T-cell (primary cell): ENCODE measurements at regions of chr19 and their contacts with region 1.

Region 1: DNA sequence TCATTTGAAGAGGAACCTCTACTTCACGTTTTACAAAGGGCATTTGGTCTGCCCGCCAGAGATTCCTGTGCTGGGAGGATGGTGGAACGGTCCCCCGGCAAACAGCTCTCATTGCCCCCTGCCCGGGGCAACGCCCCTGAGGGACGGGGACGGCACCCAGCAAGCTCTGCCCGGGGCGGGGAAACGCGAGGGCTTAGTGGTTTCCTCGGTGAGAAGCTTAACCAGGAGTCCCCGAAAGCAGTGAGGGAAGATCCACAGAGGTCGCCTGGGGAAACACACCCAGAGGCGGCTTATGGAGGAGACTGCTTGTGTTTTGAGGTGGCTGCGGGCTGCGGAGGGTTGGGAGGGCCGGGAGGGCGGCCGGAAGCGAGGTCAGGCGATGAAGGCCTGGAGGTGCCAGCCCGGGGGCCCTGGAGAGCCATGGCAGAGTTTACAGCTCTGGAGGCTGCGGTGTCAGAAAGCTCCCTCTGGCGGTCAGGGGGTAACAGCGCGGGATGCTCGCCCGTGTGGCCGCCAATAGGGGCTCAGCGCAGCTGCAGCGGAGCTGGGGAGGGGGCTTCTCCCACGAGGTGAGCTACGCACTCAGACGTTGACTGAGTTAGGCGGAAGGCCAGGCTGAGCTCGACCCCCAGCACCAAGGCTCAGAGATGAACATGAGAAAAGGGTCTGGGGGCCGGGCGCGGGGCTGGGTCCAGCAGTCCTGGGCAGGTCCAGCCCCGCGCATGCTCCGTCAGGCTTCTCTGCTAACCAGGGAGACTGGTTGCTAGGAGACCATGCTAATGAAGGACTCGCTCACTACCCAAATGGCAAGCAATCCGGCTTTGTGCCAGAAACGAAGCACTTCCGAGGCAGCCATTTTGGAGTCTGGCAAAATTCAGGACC is 652 bp upstream of the TPGS1 start:
- DNase-seq: peak; percentile 82 to 98 (median 91)
- ATAC-seq: peak; percentile 62 to 65 (median 63)
- H3K4me3 ChIP-seq: peak overlapping the region; percentile 79 to 86
- H3K4me3 Mint-ChIP-seq: peak overlapping the region; percentile 92 to 97 (median 96)
- H3K27ac ChIP-seq: peak overlapping the region; percentile 93
- H3K27ac Mint-ChIP-seq: peak overlapping the region; percentile 99 to 100
- H3K4me1 ChIP-seq: peaks cover 13 to 52% of the 10 kb centered on the region in 2 experiments
- H3K4me1 Mint-ChIP-seq: peaks cover 36 to 51% (median 41%) of the 10 kb centered on the region in 3 donors
- H3K27me3 ChIP-seq: no peaks in the 10 kb centered on the region
- H3K27me3 Mint-ChIP-seq: no peaks in the 10 kb centered on the region

Region 2: DNA sequence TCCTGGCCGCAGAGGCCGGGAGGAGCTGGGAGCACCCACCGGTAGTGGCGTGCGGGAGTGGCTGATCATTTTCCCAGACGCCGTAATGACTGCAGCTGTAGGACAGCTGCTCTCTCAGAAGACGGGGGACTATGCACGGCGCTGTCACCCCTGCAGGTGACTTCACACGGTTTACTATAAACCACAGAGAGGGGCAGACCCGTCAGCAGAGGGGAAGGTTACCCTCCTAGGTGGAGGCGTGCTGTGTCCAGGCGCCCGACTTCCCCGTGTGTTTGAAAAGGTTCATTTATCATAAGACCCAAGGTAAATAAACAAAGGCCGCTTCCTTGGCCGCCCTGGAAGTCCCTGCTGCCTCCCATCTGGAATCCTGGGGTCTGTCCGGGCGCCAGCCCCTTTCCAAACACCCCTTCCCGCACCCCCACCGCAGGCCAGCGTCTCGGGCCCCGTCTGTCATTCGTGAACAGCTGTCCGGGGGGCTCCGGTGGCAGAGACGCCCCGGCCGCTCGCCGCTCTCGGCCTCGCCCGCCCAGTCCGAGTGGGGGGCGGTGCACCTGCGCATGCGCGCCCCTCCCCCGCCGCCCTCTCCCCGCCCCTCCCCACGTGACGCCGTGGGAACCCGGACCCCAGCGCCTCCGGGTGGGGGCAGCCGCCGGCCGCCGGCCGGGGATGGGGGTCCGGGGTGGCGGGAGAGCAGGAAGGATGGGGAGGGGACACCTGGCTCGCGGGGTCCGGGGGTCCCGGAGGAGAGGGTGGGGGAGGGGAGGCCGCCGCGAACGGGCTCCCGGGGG is 46.7 kb before region 1 on chr19:
- CTCF ChIA-PET with region 1: no interaction called
- POLR2A ChIA-PET with region 1: no interaction called
- DNase-seq: peak in 11 of 35 experiments; percentile 4 to 30 (median 17)
- ATAC-seq: peak in 3 of 4 experiments; percentile 36 to 74 (median 63)
- H3K4me3 ChIP-seq: peak overlapping the region in 1 of 2 donors; percentile 21
- H3K4me3 Mint-ChIP-seq: peak overlapping the region; percentile 63 to 72 (median 70)
- H3K27ac ChIP-seq: no peak overlapping the region
- H3K27ac Mint-ChIP-seq: no peak overlapping the region
- H3K4me1 ChIP-seq: peaks cover 0 to 18% of the 10 kb centered on the region in 2 experiments
- H3K4me1 Mint-ChIP-seq: peaks cover 0 to 14% (median 10%) of the 10 kb centered on the region in 3 donors
- H3K27me3 ChIP-seq: peaks cover 10 to 71% of the 10 kb centered on the region in 2 experiments
- H3K27me3 Mint-ChIP-seq: peaks cover 0 to 31% of the 10 kb centered on the region in 2 donors

Region 3: DNA sequence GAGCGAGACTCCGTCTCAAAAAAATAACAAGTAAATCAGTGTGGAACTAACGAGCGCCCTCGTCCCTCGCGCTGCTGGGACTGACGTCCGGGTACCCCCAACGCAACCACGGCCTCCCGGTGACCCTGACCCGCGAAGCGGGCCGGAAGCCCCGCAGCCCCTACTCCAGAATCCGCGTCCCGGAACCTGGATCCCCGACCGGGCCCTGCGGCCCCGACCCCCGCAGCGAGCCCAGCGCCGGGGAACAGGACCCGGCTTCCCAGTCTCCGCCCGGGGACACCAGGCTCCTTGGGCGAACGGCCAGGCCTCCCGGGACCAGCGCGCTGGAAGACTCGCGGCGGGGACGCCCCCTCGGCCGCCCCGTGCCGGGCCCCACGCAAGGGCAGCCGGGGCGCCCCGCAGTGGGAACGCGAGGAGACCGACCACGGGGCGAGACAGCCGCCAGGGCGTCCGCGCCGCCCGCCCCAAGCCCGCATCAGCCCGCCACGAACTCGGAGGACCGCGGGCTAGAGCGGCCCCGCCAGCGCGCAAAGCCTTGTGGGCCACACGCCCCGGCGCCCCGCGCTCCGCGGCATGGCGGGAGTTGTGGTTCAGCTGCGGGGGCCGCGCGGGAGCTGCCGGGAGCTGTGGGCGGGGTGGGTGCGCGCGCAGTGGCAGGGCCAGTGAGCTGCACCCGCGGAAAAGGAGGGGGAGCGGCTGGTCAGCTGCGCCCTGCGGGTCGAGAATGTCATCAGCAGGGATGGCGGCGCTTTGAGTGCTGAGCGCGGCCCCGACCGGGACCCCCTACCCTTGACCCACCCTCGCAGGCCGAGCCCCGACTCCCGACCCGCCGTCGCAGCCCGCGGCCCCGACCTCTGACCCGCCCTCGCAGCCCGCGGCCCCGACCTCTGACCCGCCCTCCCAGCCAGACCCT is 17.9 kb before region 1 on chr19:
- CTCF ChIA-PET with region 1: interaction called, 7 to 10 read pairs
- POLR2A ChIA-PET with region 1: no interaction called
- DNase-seq: peak; percentile 77 to 95 (median 89)
- ATAC-seq: peak; percentile 94 to 98 (median 98)
- H3K4me3 ChIP-seq: peak overlapping the region; percentile 70 to 75
- H3K4me3 Mint-ChIP-seq: peak overlapping the region; percentile 78 to 82 (median 80)
- H3K27ac ChIP-seq: peak overlapping the region; percentile 82
- H3K27ac Mint-ChIP-seq: peak overlapping the region; percentile 79 to 87
- H3K4me1 ChIP-seq: peaks cover 0 to 13% of the 10 kb centered on the region in 2 experiments
- H3K4me1 Mint-ChIP-seq: peaks cover 14 to 16% (median 14%) of the 10 kb centered on the region in 3 donors
- H3K27me3 ChIP-seq: peaks cover 3 to 25% of the 10 kb centered on the region in 2 experiments
- H3K27me3 Mint-ChIP-seq: peaks cover 1 to 17% of the 10 kb centered on the region in 2 donors

Region 4: GRCh38 chr19:531009-531752 is 24.5 kb after region 1 on chr19:
- CTCF ChIA-PET with region 1: interaction called, 3 to 36 read pairs
- POLR2A ChIA-PET with region 1: interaction called, 6 to 7 read pairs
- DNase-seq: peak; percentile 60 to 94 (median 82)
- ATAC-seq: peak; percentile 79 to 83 (median 83)
- H3K4me3 ChIP-seq: peak overlapping the region; percentile 59 to 71
- H3K4me3 Mint-ChIP-seq: peak overlapping the region; percentile 75 to 86 (median 80)
- H3K27ac ChIP-seq: peak overlapping the region; percentile 45
- H3K27ac Mint-ChIP-seq: peak overlapping the region; percentile 49 to 79
- H3K4me1 ChIP-seq: peaks cover 6 to 44% of the 10 kb centered on the region in 2 experiments
- H3K4me1 Mint-ChIP-seq: peaks cover 15 to 27% (median 19%) of the 10 kb centered on the region in 3 donors
- H3K27me3 ChIP-seq: peaks cover 0 to 19% of the 10 kb centered on the region in 2 experiments
- H3K27me3 Mint-ChIP-seq: peaks cover 0 to 3% of the 10 kb centered on the region in 2 donors

Region 5: DNA sequence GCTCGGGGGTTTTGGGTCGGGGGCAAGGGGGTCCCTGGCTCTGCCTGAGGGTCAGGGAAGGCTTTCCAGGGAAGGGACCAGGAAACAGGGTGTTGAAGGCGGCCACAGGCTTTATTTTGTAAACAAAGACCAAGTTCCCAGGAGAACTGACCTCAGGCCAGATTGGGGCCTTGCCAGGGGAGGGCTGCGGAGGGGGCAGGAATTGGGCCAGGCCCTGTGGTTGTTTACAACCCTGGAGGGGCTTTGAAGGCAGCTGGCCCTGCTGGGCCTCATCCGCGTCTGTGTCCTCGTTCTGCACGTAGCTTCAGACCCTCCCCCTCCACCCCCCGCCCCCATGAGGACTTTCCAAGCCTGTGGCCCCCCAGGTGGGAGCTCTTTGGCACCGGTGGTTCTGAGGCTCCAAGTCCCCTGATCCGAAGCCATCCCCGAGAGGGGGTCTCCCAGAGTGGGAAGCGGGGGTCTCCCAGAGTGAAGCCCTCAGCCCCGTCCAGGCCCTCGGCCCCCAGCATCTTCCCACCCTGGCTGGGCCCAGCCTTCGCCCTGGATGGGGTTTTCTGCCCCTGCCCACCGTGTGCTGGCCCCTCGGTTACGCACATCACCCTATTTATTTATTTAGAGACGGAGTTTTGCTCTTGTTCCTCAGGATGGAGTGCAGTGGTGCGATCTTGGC is 52.3 kb after region 1 on chr19:
- CTCF ChIA-PET with region 1: no interaction called
- POLR2A ChIA-PET with region 1: no interaction called
- DNase-seq: no peak
- ATAC-seq: no peak
- H3K4me3 ChIP-seq: no peak overlapping the region
- H3K4me3 Mint-ChIP-seq: no peak overlapping the region
- H3K27ac ChIP-seq: no peak overlapping the region
- H3K27ac Mint-ChIP-seq: no peak overlapping the region
- H3K4me1 ChIP-seq: peaks cover 0 to 8% of the 10 kb centered on the region in 2 experiments
- H3K4me1 Mint-ChIP-seq: no peaks in the 10 kb centered on the region
- H3K27me3 ChIP-seq: no peaks in the 10 kb centered on the region
- H3K27me3 Mint-ChIP-seq: no peaks in the 10 kb centered on the region

Region 6: DNA sequence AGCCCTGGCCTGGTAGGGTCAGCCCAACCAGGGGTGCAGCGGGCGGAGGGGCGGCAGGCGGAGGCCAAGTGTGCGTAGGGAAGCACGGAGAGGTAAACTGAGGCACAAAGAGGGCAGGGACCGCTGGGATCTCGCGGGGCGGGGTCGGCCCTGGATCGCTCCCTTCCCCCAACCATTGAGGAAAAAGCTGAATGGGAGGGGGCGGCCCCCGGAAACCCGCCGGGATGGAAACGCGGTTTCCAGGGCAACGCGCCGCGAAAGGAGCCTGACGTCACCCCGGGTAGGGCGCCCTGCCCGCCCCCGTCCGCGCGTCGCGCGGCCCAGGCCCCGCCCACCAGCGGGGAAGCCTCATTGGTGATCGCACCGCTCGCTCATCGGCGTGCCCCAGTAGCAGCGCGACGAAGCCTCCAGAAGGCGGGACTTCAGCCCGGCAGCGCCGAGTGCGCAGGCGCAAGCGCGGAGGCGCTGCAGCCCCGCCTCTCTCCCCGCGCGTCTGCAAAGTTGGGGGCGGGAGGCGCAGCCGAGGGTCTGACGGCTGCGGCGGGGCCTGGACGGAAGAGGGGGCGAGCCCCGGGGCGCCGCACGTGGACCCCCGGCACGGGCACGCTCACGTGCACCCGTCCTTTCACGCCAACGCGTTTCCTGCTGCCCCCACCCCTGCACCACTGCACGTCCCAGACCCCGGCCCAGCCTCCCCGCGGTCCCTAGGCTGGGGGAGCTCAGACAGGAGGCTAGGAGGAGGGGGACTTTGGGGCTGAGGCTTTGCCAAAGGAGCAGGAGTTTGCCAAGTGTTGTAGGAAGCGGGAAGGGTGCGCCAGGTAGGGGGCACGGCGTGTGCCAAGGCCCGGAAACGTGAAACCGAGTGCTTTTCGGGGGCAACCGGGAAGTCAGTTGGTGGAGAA is 754.2 kb after region 1 on chr19:
- CTCF ChIA-PET with region 1: no interaction called
- POLR2A ChIA-PET with region 1: no interaction called
- DNase-seq: peak; percentile 90 to 99 (median 96)
- ATAC-seq: peak; percentile 82 to 89 (median 87)
- H3K4me3 ChIP-seq: peak overlapping the region; percentile 74 to 91
- H3K4me3 Mint-ChIP-seq: peak overlapping the region; percentile 79 to 87 (median 83)
- H3K27ac ChIP-seq: peak overlapping the region; percentile 99
- H3K27ac Mint-ChIP-seq: peak overlapping the region; percentile 93 to 94
- H3K4me1 ChIP-seq: peaks cover 34 to 74% of the 10 kb centered on the region in 2 experiments
- H3K4me1 Mint-ChIP-seq: peaks cover 52 to 68% (median 52%) of the 10 kb centered on the region in 3 donors
- H3K27me3 ChIP-seq: no peaks in the 10 kb centered on the region
- H3K27me3 Mint-ChIP-seq: no peaks in the 10 kb centered on the region